BJ (cell line): ENCODE measurements at regions of chr3 and their contacts with region 1.

Region 1: GRCh38 chr3:32596909-32597369 is 26.3 kb upstream of the DYNC1LI1 start:
- DNase-seq: no peak
- H3K4me3 ChIP-seq: no peak overlapping the region
- H3K27me3 ChIP-seq: peaks cover 2% of the 10 kb centered on the region; the same call in 1 of the 2 replicates
- CTCF ChIP-seq: no peak

Region 2: DNA sequence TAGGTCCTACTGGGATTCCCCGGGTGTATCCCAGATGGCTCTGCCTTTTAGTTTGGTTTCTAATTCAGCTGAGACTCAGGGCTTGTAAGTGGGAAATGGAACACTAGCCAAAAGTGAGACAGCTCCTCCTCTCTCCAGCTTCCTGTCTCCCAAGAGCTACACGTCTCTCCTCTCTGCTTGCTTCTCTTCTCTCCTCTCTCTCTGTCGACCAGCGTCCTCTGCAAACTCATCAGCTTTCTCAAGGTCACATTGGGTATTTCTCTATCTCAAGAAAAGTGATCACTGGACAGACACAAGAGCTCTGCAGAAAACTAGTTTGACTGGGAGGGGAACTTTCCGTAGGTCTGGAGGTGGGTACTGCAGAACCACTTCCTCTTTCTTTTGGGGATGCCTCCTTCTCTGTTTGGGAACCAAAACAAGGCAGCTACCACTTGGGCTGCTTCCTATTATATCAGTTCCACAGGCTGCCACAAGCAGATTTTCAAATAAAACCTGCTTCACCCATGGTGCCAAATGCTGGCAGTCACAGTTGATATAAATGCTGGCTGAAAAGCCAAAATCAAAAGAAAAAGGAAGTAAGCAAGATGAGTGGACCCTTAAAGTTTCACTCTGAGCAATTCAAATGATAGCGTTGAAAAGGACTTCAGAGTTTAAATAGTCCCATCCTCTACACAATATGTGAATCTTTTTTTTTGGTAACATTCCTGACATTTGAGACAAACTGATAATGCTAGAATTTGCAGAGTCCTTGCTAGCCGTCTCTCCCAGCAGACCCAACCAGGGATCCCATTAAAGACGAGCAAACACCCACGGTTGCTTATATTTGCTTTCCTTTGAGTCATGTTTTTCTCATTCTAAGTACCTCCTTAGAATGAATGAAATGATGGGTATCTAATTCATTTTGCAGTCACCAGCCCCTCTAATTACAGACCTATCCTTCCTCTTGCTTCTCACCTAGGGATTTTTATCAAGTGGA is 19.1 kb before region 1 on chr3:
- CTCF ChIA-PET with region 1: no interaction called
- POLR2A ChIA-PET with region 1: interaction called, 24 read pairs
- DNase-seq: no peak
- H3K4me3 ChIP-seq: no peak overlapping the region
- H3K27me3 ChIP-seq: no peaks in the 10 kb centered on the region
- CTCF ChIP-seq: no peak

Region 3: GRCh38 chr3:32613183-32613582 is 16.2 kb after region 1 on chr3:
- CTCF ChIA-PET with region 1: no interaction called
- POLR2A ChIA-PET with region 1: no interaction called
- DNase-seq: no peak
- H3K4me3 ChIP-seq: no peak overlapping the region
- H3K27me3 ChIP-seq: no peaks in the 10 kb centered on the region
- CTCF ChIP-seq: no peak